Gastrocnemius medialis (tissue), 4 donors: ENCODE measurements at regions of chr1 and their contacts with region 1.

Region 1: GRCh38 chr1:246579818-246580217 is 13.6 kb downstream of the CNST start:
- DNase-seq: no peak
- ATAC-seq: no peak
- H3K4me3 ChIP-seq: no peak overlapping the region
- H3K27ac ChIP-seq: peak overlapping the region; percentile 47 to 91 (median 78)
- H3K4me1 ChIP-seq: peaks cover 58 to 83% of the 10 kb centered on the region in 2 donors
- H3K27me3 ChIP-seq: no peaks in the 10 kb centered on the region
- CTCF ChIP-seq: no peak
- POLR2A ChIP-seq: no peak

Region 2: DNA sequence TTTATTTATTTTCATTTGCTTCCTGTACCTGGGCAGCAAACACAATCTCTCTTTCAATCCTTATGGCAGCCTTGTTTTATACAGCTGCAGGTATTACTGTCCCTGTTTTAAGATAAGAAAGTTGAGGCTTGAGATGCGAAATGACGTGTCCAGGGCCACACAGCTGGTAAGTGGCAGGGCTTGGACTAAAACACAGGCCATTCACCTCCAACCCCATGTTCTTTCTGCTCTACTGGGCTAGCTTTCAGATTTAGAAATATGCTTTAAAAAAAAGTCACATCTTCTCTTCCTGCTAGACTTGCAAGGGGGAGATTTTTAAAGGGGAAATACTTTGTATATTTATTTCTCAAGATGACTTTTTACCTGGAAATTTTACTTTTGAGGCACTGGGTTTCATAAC is 49.2 kb after region 1 on chr1:
- in situ Hi-C with region 1: loop called in 1 of 4 experiments (anchors 10 kb)
- intact Hi-C with region 1: no loop called
- DNase-seq: no peak
- ATAC-seq: no peak
- H3K4me3 ChIP-seq: no peak overlapping the region
- H3K27ac ChIP-seq: no peak overlapping the region
- H3K4me1 ChIP-seq: peaks cover 0 to 8% of the 10 kb centered on the region in 2 donors
- H3K27me3 ChIP-seq: no peaks in the 10 kb centered on the region
- CTCF ChIP-seq: no peak
- POLR2A ChIP-seq: no peak